ENCODE measurements at regions of chr12 and their contacts with region 1.

Region 1: GRCh38 chr12:42237052-42237852 is 796 bp downstream of the YAF2 start:
- DNase-seq: peak; percentile 82
- H3K4me3 ChIP-seq: peak overlapping the region; percentile 49 to 95 (median 74)
- H3K27ac ChIP-seq: peak overlapping the region; percentile 97 to 98 (median 98)
- H3K4me1 ChIP-seq: peaks cover 0 to 38% (median 23%) of the 10 kb centered on the region in 4 donors
- H3K27me3 ChIP-seq: no peaks in the 10 kb centered on the region
- CTCF ChIP-seq: peak; percentile 36 to 65 (median 49)
- EP300 ChIP-seq: no peak
- POLR2A ChIP-seq: peak; percentile 47

Region 2: GRCh38 chr12:41112910-41113309 is 1124.3 kb before region 1 on chr12:
- in situ Hi-C with region 1: no loop called
- intact Hi-C with region 1: loop called (anchors 10 kb)
- DNase-seq: no peak
- H3K4me3 ChIP-seq: no peak overlapping the region
- H3K27ac ChIP-seq: no peak overlapping the region
- H3K4me1 ChIP-seq: peaks cover 0 to 12% (median 0%) of the 10 kb centered on the region in 4 donors
- H3K27me3 ChIP-seq: no peaks in the 10 kb centered on the region
- CTCF ChIP-seq: no peak
- EP300 ChIP-seq: no peak
- POLR2A ChIP-seq: no peak

Region 3: DNA sequence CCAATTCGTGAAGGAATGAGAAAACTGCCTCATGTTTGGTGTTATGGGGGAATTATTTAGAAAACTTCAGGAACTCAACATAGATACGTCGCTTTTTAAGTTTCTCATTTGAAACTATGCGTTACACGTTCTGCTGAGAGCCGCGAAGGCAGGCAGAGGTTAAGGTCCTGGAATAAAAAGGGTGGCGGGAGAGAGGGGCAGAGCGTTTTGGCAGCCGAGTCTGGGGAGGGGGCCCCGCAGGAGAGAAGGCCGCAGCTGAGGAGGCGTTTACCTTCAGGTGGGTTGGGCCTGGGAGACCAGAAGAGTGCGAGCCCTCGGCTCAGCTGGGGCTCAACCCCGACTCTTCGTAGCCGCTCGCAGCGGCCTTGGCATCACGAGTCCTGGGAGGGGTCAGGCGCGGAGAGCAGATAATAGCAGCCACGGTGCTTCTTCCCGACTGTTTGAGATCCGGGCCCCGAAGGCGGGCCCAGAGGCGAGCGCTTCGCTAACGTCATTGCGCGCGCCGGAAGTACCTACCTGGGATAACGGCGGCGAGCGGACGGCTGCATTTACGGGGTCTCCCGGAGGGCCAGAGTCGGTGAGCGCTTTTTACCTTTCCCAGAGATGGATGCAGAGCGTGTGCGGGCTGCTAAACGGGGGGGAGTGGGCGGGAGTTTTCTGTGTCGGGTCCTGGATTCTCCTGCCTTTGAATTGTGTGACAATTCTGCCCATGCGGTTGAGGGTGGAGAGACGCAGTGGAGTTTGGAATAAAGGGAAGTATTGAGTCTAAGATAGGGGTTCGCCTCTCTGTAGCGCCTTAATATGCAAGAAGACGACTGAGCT is 88.6 kb after region 1 on chr12 and contains the starts of genes PPHLN1 and ZCRB1:
- in situ Hi-C with region 1: loop called in 2 of 4 experiments (anchors 10 kb)
- intact Hi-C with region 1: no loop called
- DNase-seq: peak; percentile 87
- H3K4me3 ChIP-seq: peak within 1 kb of the TSS; percentile 66 to 82 (median 78)
- H3K27ac ChIP-seq: peak within 1 kb of the TSS; percentile 86 to 93 (median 86)
- H3K4me1 ChIP-seq: peaks cover 12 to 23% (median 21%) of the 10 kb centered on the region in 4 donors
- H3K27me3 ChIP-seq: no peaks in the 10 kb centered on the region
- CTCF ChIP-seq: peak in 1 of 5 experiments; percentile 30
- EP300 ChIP-seq: no peak
- POLR2A ChIP-seq: peak; percentile 78
- total RNA-seq, gene PPHLN1: 44.9 to 324 (median 59.6) TPM
- total RNA-seq, gene ZCRB1: 3.4 to 22.7 (median 15.2) TPM